Gastrocnemius medialis (tissue), 4 donors: ENCODE measurements at regions of chr15 and their contacts with region 1.

Region 1: GRCh38 chr15:25022233-25022632 is 67.4 kb downstream of the SNRPN start:
- DNase-seq: no peak
- ATAC-seq: no peak
- H3K4me3 ChIP-seq: no peak overlapping the region
- H3K27ac ChIP-seq: no peak overlapping the region
- H3K4me1 ChIP-seq: no peaks in the 10 kb centered on the region
- H3K27me3 ChIP-seq: no peaks in the 10 kb centered on the region
- CTCF ChIP-seq: no peak
- POLR2A ChIP-seq: no peak

Region 2: DNA sequence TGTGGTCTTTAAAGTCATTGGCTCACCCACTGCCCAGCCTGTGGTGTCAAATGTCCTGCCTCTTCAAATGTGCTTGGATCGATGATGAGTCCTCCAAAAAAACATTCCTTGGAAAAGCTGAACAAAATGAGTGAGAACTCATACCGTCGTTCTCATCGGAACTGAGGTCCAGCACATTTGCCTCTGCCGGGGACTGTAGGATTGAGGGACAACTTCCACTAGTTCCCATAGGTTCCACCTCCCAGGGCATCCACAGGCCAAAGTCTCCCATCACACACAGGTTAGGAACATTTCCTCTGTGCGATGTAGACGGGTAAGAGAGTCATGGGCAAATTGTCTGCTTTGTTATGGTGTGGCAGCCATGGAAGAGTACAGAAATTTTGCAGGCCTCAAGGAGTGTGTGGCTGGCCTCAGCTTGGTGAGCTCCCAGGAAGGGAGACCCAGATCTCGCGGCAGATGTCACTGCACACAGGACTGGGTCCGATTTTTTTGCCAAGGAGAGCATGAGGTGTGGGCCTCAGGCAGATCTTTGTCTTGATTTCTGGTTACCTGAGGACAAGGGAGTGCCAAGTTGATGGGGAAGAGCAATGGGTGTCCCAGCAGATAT is 48.2 kb after region 1 on chr15:
- in situ Hi-C with region 1: loop called in 1 of 4 experiments (anchors 10 kb)
- intact Hi-C with region 1: no loop called
- DNase-seq: no peak
- ATAC-seq: no peak
- H3K4me3 ChIP-seq: no peak overlapping the region
- H3K27ac ChIP-seq: no peak overlapping the region
- H3K4me1 ChIP-seq: no peaks in the 10 kb centered on the region
- H3K27me3 ChIP-seq: peaks cover 0 to 2% (median 0%) of the 10 kb centered on the region in 3 donors
- CTCF ChIP-seq: no peak
- POLR2A ChIP-seq: no peak

Region 3: DNA sequence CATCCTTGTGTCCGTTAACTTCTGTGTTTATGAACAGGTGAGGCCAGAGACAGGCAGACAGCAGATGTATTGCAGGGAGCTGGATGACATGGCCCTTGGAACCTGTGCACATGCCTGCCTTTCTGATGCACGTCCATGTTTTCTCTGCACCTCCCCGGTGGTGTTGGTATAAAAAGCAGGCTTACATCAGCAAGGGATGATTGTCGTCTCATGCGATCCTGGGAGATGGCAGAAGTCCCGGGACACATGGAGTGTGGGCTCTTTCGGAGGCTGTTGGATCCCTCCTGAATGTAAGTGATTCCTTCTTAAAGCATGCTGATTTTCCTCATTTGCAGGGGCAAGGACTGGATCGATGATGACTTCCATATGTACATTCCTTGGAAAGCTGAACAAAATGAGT is 67.3 kb after region 1 on chr15:
- in situ Hi-C with region 1: loop called in 1 of 4 experiments (anchors 10 kb)
- intact Hi-C with region 1: no loop called
- DNase-seq: no peak
- ATAC-seq: no peak
- H3K4me3 ChIP-seq: no peak overlapping the region
- H3K27ac ChIP-seq: no peak overlapping the region
- H3K4me1 ChIP-seq: peaks cover 0 to 16% of the 10 kb centered on the region in 2 donors
- H3K27me3 ChIP-seq: no peaks in the 10 kb centered on the region
- CTCF ChIP-seq: no peak
- POLR2A ChIP-seq: no peak

Region 4: GRCh38 chr15:25497934-25498333 is 475.7 kb after region 1 on chr15:
- in situ Hi-C with region 1: no loop called
- intact Hi-C with region 1: no loop called
- DNase-seq: no peak
- ATAC-seq: no peak
- H3K4me3 ChIP-seq: no peak overlapping the region
- H3K27ac ChIP-seq: no peak overlapping the region
- H3K4me1 ChIP-seq: no peaks in the 10 kb centered on the region
- H3K27me3 ChIP-seq: no peaks in the 10 kb centered on the region
- CTCF ChIP-seq: no peak
- POLR2A ChIP-seq: no peak